ENCODE measurements at regions of chr11 and their contacts with region 1.

Region 1: DNA sequence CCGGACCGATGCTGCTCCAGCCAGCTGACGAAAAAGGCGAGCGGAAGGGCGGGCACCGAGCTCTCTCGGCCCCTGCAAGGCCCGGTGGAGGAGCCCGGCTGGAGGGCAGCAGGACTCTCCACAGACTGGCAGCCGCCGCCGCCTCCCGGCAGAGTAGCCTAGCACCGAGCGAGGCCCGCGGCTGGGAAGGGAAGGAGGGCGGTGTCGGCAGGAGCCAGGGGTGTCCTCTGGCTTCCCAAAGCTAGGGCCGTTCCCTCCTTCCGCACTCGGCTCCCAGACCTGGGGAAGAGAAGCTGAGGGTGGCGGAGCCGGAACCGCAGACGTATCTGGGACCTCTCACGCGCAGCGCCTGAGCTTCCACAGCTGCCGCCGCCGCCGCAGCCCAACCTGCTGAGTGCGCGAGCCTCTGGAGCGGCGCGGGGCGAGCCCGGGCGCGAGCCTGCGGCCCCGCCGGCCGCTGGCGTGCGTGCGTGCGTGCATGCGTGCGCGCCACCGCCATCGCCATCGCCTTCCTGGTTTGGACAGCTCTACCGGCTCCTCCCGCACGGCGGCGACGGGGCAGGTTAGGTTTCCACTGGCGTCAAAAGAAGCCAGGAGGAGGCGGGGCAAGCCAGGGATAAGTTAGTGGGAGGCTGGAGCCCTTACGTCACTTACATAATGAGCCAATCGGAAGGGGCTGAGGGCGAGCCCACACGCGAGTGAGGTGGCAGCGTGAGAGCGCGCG is at the start of gene RAB6A:
- DNase-seq: peak; percentile 100
- H3K4me3 Mint-ChIP-seq: peak within 1 kb of the TSS; percentile 98
- H3K27ac Mint-ChIP-seq: peak within 1 kb of the TSS; percentile 97
- H3K4me1 Mint-ChIP-seq: peaks cover 13% of the 10 kb centered on the region
- H3K27me3 Mint-ChIP-seq: peaks cover under 1% of the 10 kb centered on the region
- CTCF ChIP-seq: peak; percentile 16
- total RNA-seq, gene RAB6A: 170 and 172 TPM in 2 replicates

Region 2: DNA sequence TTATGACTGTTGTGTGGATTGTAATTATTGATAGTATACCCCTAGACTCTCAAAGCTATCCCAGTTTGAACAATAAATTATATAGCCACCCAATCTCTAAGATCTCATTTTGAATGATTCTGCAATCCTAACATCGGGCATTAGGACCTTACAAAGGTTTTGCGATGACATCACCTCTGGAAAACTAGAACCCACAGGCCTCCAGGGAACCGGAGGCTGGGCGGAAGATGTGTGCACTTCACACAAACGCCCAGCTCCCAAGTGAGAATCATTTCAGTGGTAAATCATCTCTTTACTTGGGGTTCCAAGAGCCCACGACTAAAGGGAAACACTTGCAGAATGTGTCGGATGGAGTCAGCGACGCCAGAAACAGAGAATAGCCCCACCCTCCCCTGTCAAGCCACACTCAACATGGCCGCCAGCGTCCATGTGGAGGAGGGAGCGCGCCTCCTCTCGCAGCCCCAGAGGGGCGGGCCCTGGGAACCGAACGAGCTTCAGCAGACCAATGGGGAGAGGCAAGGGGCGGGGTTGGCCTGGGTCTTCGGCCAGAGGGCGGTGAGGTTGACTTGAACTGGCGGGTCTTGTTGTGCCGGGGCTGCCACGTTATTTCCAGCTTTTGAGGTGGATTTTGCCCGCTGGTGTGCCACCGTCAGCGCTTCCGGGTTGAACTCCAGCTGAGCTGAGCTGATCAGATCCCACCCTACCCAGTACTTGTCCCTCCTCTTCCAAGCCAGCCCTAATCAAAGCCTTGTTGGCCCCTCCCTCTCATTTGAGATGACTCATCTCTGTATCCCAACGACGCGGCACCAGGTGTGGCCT is 18.5 kb after region 1 on chr11:
- CTCF ChIA-PET with region 1: interaction called, 13 read pairs
- POLR2A ChIA-PET with region 1: interaction called, 211 read pairs
- intact Hi-C with region 1: loop called (anchors 1 kb)
- DNase-seq: peak; percentile 98
- H3K4me3 Mint-ChIP-seq: peak overlapping the region; percentile 98
- H3K27ac Mint-ChIP-seq: peak overlapping the region; percentile 99
- H3K4me1 Mint-ChIP-seq: no peaks in the 10 kb centered on the region
- H3K27me3 Mint-ChIP-seq: no peaks in the 10 kb centered on the region
- CTCF ChIP-seq: no peak

Region 3: GRCh38 chr11:73787643-73788537 is 27.0 kb after region 1 on chr11 and contains the start of gene MRPL48:
- CTCF ChIA-PET with region 1: interaction called, 4 read pairs
- POLR2A ChIA-PET with region 1: interaction called, 67 read pairs
- intact Hi-C with region 1: no loop called
- DNase-seq: peak; percentile 95
- H3K4me3 Mint-ChIP-seq: peak within 1 kb of the TSS; percentile 95
- H3K27ac Mint-ChIP-seq: peak within 1 kb of the TSS; percentile 96
- H3K4me1 Mint-ChIP-seq: peaks cover 12% of the 10 kb centered on the region
- H3K27me3 Mint-ChIP-seq: no peaks in the 10 kb centered on the region
- CTCF ChIP-seq: no peak
- total RNA-seq, gene MRPL48: 36.8 and 41.6 TPM in 2 replicates

Region 4: GRCh38 chr11:73866586-73866996 is 105.8 kb after region 1 on chr11:
- CTCF ChIA-PET with region 1: no interaction called
- POLR2A ChIA-PET with region 1: interaction called, 15 read pairs
- intact Hi-C with region 1: loop called (anchors 1 kb)
- DNase-seq: peak; percentile 75
- H3K4me3 Mint-ChIP-seq: no peak overlapping the region
- H3K27ac Mint-ChIP-seq: no peak overlapping the region
- H3K4me1 Mint-ChIP-seq: peaks cover 13% of the 10 kb centered on the region
- H3K27me3 Mint-ChIP-seq: no peaks in the 10 kb centered on the region
- CTCF ChIP-seq: no peak

Region 5: DNA sequence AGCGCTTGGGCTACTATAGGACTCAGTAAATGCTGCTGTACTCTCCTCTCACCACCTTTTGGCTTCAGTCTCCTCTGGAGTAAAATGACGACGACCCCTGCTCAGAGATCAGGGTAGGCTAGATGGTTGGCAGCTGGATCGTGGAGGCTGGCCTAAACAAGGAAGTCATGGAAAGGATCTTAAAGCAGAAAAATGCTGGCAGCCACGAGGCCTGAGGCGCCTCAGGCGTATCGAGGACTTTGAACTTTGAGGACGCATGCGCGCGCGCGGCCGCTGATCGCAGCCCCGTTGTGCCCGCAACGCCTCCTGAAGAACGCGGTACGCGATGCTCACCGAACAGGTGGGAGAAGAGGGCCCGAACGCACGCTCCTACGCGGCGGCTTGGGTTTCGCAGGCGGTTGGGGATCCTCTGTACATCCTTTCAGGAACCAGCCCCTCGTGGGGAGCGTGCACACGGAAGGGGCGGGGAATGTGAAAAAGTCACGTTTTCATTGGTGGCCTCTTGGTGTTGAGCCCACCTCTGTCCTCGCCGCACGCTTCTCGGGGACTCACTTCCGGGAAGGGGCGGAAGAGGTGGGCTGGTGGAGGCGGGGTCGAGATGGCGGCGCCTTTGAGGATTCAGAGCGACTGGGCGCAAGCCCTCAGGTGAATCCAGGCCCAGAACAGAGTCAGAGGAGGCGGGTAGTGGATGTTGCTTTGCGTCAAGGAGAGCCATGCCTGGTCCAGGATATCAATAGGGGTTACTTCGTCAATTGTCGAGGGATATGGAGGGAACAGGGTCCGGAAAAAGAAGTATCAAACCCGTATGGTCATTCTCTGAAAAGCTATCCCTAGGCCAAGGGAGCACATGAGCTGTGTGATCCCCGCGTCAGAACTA is 115.8 kb after region 1 on chr11 and contains the starts of genes COA4 and PAAF1:
- CTCF ChIA-PET with region 1: no interaction called
- POLR2A ChIA-PET with region 1: interaction called, 18 read pairs
- intact Hi-C with region 1: loop called (anchors 1 kb)
- DNase-seq: peak; percentile 98
- H3K4me3 Mint-ChIP-seq: peak within 1 kb of the TSS; percentile 94
- H3K27ac Mint-ChIP-seq: peak within 1 kb of the TSS; percentile 92
- H3K4me1 Mint-ChIP-seq: peaks cover 12% of the 10 kb centered on the region
- H3K27me3 Mint-ChIP-seq: no peaks in the 10 kb centered on the region
- CTCF ChIP-seq: no peak
- total RNA-seq, gene COA4: 87.1 and 103 TPM in 2 replicates
- total RNA-seq, gene PAAF1: 21.6 and 26.4 TPM in 2 replicates

Region 6: DNA sequence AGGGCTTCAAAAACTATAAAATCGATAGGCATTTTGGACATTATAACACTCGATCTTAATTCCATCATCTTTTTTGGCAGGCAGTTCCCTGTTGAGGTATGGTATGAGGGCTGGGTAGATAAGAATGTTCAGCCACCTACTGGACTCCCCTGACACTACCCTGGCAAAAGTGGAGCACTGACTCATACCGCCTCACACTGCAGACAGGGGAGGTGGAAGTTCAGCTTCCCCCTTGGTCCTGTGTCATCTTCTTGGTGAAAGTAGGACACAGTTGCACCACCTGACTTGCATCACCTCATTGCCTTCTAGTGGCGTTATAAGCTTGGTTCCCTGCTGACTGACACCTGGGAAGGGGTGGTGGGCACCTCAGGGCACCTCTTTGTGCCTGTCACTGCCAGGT is 146.3 kb after region 1 on chr11:
- CTCF ChIA-PET with region 1: no interaction called
- POLR2A ChIA-PET with region 1: interaction called, 5 read pairs
- intact Hi-C with region 1: loop called (anchors 2 kb)
- DNase-seq: peak; percentile 61
- H3K4me3 Mint-ChIP-seq: no peak overlapping the region
- H3K27ac Mint-ChIP-seq: no peak overlapping the region
- H3K4me1 Mint-ChIP-seq: no peaks in the 10 kb centered on the region
- H3K27me3 Mint-ChIP-seq: no peaks in the 10 kb centered on the region
- CTCF ChIP-seq: no peak

Region 7: DNA sequence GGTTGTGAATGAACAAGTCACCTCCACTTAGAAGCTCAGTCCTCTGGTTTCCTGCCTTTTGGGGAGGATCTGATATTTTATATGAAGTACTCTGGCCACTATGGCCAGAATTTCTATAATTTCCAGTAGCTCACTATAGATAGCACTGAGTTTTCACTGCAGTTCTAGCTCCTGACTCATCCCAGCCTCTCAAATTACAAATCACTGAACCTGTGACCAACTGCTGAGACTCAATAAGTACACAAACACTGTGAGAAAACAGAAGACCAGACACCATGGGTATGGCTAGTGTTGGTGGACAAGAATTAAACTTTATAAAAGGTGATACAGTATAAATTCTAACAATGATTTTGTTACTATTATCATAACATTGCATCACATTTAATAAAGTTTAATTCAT is 295.1 kb after region 1 on chr11:
- CTCF ChIA-PET with region 1: no interaction called
- POLR2A ChIA-PET with region 1: no interaction called
- intact Hi-C with region 1: no loop called
- DNase-seq: peak; percentile 48
- H3K4me3 Mint-ChIP-seq: no peak overlapping the region
- H3K27ac Mint-ChIP-seq: no peak overlapping the region
- H3K4me1 Mint-ChIP-seq: no peaks in the 10 kb centered on the region
- H3K27me3 Mint-ChIP-seq: no peaks in the 10 kb centered on the region
- CTCF ChIP-seq: no peak

Region 8: DNA sequence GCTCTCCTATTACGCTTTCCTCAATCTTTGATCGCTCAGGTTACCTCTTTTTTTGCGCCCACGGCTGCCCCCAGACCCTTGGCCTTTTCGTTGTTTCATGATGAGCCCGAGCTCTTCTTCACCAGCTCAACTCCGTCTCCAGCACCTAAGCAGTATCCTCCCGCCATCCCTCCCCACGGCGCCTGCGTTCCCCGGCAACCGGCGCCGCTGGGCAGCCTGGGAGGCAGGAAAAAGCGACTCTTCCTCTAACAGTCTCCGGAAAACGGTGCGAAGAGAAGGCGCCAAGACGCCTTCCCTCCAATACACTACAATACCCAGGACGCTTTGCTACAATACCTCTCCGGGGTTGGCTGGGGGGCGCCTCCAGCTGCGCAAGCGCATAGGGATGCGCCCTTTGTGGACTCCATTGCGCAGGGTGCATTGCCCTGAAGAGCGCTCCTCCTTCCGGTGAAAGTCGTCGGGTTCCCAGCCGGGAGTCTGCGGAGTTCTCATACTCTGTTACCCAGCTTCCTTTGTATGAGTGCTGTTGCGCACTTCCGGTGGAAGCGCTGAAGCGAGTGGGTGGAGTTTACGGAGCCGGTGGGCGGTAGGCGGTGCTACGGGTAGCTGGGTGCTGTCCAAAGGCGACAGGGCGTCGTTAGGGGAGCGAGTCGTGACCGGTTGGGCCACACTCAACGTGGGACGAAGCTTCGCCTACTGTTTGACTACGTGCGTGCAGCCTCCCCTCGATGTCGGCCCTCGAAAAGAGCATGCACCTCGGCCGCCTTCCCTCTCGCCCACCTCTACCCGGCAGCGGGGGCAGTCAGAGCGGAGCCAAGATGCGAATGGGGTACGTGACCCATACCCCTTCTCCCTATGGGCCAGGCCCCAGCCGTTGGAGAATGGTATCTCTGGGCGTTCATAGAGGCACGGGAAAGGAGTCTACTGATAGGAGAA is 410.1 kb after region 1 on chr11 and contains the starts of genes C2CD3 and PPME1:
- CTCF ChIA-PET with region 1: no interaction called
- POLR2A ChIA-PET with region 1: interaction called, 15 read pairs
- intact Hi-C with region 1: no loop called
- DNase-seq: peak; percentile 99
- H3K4me3 Mint-ChIP-seq: no peak within 1 kb of the TSS
- H3K27ac Mint-ChIP-seq: no peak within 1 kb of the TSS
- H3K4me1 Mint-ChIP-seq: peaks cover 6% of the 10 kb centered on the region
- H3K27me3 Mint-ChIP-seq: no peaks in the 10 kb centered on the region
- CTCF ChIP-seq: peak; percentile 29
- total RNA-seq, gene C2CD3: 18.7 and 23.2 TPM in 2 replicates
- total RNA-seq, gene PPME1: 36.3 and 38.1 TPM in 2 replicates